ENCODE measurements at regions of chr7 and their contacts with region 1.

Region 1: GRCh38 chr7:37352974-37353948 is 95.4 kb downstream of the ELMO1 start:
- DNase-seq: peak; percentile 50 to 91 (median 66)
- ATAC-seq: peak; percentile 83
- H3K4me3 ChIP-seq: peak overlapping the region; percentile 81
- H3K4me3 Mint-ChIP-seq: peak overlapping the region; percentile 93
- H3K27ac ChIP-seq: peak overlapping the region; percentile 63 to 69
- H3K27ac Mint-ChIP-seq: peak overlapping the region; percentile 90
- H3K4me1 ChIP-seq: peaks cover 59% of the 10 kb centered on the region
- H3K4me1 Mint-ChIP-seq: peaks cover 90% of the 10 kb centered on the region
- H3K27me3 ChIP-seq: no peaks in the 10 kb centered on the region
- H3K27me3 Mint-ChIP-seq: no peaks in the 10 kb centered on the region
- CTCF ChIP-seq: peak; percentile 97

Region 2: DNA sequence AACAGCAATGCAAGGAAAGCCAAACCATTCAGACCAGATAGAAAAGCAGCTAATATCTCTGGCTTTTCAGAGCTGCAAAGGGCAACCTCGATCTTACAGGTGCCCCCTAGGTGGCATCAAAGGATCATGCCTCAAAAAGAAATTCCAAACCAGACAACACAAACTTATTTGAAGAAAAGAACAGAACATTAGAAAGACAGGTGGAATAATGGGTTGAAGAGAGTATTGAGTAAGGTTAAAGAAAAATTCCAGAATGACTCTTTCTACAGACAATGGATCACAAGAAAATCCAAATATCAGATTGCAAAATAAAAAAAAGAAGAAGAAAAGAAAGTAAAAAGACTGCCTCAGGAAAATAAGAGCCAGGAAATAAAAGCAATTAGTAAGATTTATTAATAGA is 118.3 kb before region 1 on chr7:
- CTCF ChIA-PET with region 1: interaction called, 6 read pairs
- POLR2A ChIA-PET with region 1: interaction called, 13 read pairs
- intact Hi-C with region 1: loop called (anchors 1 to 2 kb)
- DNase-seq: peak in 6 of 14 experiments; percentile 5 to 61 (median 34)
- ATAC-seq: no peak
- H3K4me3 ChIP-seq: no peak overlapping the region
- H3K4me3 Mint-ChIP-seq: no peak overlapping the region
- H3K27ac ChIP-seq: no peak overlapping the region
- H3K27ac Mint-ChIP-seq: no peak overlapping the region
- H3K4me1 ChIP-seq: peaks cover 4% of the 10 kb centered on the region
- H3K4me1 Mint-ChIP-seq: peaks cover 33% of the 10 kb centered on the region
- H3K27me3 ChIP-seq: no peaks in the 10 kb centered on the region
- H3K27me3 Mint-ChIP-seq: no peaks in the 10 kb centered on the region
- CTCF ChIP-seq: peak; percentile 49

Region 3: DNA sequence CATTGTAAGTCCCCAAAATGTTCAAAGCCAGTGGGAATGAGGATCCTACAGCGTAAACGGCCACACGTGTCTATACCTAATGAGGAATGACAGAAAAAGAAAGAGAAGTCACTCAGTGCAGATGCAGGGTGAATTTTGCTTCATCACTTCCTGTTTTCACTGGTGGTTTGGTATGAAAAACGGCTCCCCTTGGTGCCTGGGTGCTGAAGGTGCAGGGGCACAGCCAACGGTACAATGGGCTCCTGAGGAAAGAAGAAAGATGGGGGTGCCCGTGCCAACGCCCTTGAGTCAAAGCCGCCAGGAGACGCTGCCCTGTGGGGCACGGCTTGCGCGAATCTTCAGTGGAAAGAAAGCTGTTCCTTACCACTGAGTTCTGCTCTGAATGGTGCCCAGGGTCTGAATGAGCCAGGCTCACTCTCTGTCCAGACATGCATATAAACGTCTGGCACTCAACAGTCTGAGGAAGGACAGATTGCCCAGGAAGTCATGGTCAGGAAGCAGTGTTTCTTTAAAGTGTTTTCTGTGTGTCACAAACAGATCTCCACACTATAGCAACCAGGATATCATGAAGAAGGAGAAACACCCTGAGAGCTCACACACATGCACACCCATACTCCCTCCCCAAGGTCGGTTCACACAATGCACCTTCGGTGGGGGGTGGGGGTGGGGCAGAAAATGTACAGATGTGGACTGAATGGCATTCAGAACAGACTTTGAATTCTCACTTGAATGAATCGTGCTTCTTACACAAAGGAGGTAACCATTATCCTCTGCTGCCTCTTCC is 10.4 kb before region 1 on chr7:
- CTCF ChIA-PET with region 1: interaction called, 21 read pairs
- POLR2A ChIA-PET with region 1: interaction called, 17 read pairs
- intact Hi-C with region 1: loop called in 1 of 2 experiments (anchors 1 kb)
- DNase-seq: peak; percentile 52 to 91 (median 70)
- ATAC-seq: peak; percentile 88
- H3K4me3 ChIP-seq: peak overlapping the region; percentile 62
- H3K4me3 Mint-ChIP-seq: peak overlapping the region; percentile 90
- H3K27ac ChIP-seq: peak overlapping the region; percentile 67 to 82
- H3K27ac Mint-ChIP-seq: peak overlapping the region; percentile 95
- H3K4me1 ChIP-seq: peaks cover 40% of the 10 kb centered on the region
- H3K4me1 Mint-ChIP-seq: peaks cover 72% of the 10 kb centered on the region
- H3K27me3 ChIP-seq: no peaks in the 10 kb centered on the region
- H3K27me3 Mint-ChIP-seq: no peaks in the 10 kb centered on the region
- CTCF ChIP-seq: peak; percentile 23

Region 4: DNA sequence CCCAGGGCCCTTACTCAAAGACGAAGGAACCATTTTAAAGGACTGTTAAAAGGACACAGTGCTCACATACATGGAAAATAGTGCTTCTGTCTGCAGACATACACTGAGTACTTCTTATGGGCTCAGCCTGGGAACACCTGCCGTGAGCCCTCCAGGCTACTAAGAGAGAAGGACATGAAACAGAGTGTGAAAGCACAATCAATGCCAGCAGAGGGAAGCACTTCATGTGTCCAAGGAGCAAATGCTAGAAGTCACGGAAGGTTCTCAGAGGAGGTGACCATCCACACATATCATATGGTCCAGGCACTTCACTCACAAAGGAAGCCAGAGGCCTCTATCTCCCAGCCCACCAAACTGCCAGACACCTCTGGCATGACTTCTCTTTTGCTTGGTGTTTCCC is 79.9 kb after region 1 on chr7:
- CTCF ChIA-PET with region 1: interaction called, 3 read pairs
- POLR2A ChIA-PET with region 1: interaction called, 7 read pairs
- intact Hi-C with region 1: loop called in 1 of 2 experiments (anchors 5 kb)
- DNase-seq: peak in 1 of 14 experiments; percentile 22
- ATAC-seq: no peak
- H3K4me3 ChIP-seq: no peak overlapping the region
- H3K4me3 Mint-ChIP-seq: peak overlapping the region; percentile 74
- H3K27ac ChIP-seq: no peak overlapping the region
- H3K27ac Mint-ChIP-seq: peak overlapping the region; percentile 83
- H3K4me1 ChIP-seq: peaks cover 33% of the 10 kb centered on the region
- H3K4me1 Mint-ChIP-seq: peaks cover 84% of the 10 kb centered on the region
- H3K27me3 ChIP-seq: no peaks in the 10 kb centered on the region
- H3K27me3 Mint-ChIP-seq: no peaks in the 10 kb centered on the region
- CTCF ChIP-seq: no peak

Region 5: GRCh38 chr7:37476881-37477450 is 123.7 kb after region 1 on chr7:
- CTCF ChIA-PET with region 1: no interaction called
- POLR2A ChIA-PET with region 1: no interaction called
- intact Hi-C with region 1: no loop called
- DNase-seq: no peak
- ATAC-seq: no peak
- H3K4me3 ChIP-seq: no peak overlapping the region
- H3K4me3 Mint-ChIP-seq: no peak overlapping the region
- H3K27ac ChIP-seq: no peak overlapping the region
- H3K27ac Mint-ChIP-seq: no peak overlapping the region
- H3K4me1 ChIP-seq: no peaks in the 10 kb centered on the region
- H3K4me1 Mint-ChIP-seq: no peaks in the 10 kb centered on the region
- H3K27me3 ChIP-seq: no peaks in the 10 kb centered on the region
- H3K27me3 Mint-ChIP-seq: peaks cover 7% of the 10 kb centered on the region
- CTCF ChIP-seq: no peak

Region 6: GRCh38 chr7:37510043-37510634 is 156.9 kb after region 1 on chr7:
- CTCF ChIA-PET with region 1: no interaction called
- POLR2A ChIA-PET with region 1: interaction called, 3 read pairs
- intact Hi-C with region 1: loop called in 1 of 2 experiments (anchors 5 kb)
- DNase-seq: peak in 7 of 14 experiments; percentile 3 to 61 (median 21)
- ATAC-seq: peak; percentile 71
- H3K4me3 ChIP-seq: no peak overlapping the region
- H3K4me3 Mint-ChIP-seq: no peak overlapping the region
- H3K27ac ChIP-seq: no peak overlapping the region
- H3K27ac Mint-ChIP-seq: no peak overlapping the region
- H3K4me1 ChIP-seq: no peaks in the 10 kb centered on the region
- H3K4me1 Mint-ChIP-seq: no peaks in the 10 kb centered on the region
- H3K27me3 ChIP-seq: peaks cover 0 to 4% of the 10 kb centered on the region in 2 experiments
- H3K27me3 Mint-ChIP-seq: peaks cover 25% of the 10 kb centered on the region
- CTCF ChIP-seq: peak; percentile 67

Measured in CD4-positive, alpha-beta T cell (primary cell).